Endothelial cell of umbilical vein (primary cell): ENCODE measurements at regions of chr1 and their contacts with region 1.

Region 1: GRCh38 chr1:40877698-40878097 is 15.5 kb upstream of the CITED4 start:
- DNase-seq: peak; percentile 94
- H3K4me3 ChIP-seq: no peak overlapping the region
- H3K27ac ChIP-seq: peak overlapping the region; percentile 98
- H3K4me1 ChIP-seq: peaks cover 42% of the 10 kb centered on the region
- H3K27me3 ChIP-seq: no peaks in the 10 kb centered on the region
- CTCF ChIP-seq: no peak
- POLR2A ChIP-seq: no peak

Region 2: GRCh38 chr1:40862008-40862863 is 15.5 kb before region 1 on chr1 and contains the start of gene CITED4:
- CTCF ChIA-PET with region 1: interaction called, 10 read pairs
- POLR2A ChIA-PET with region 1: interaction called, 13 read pairs
- dilution Hi-C with region 1: no loop called
- intact Hi-C with region 1: loop called (anchors 1 kb)
- DNase-seq: peak; percentile 94
- H3K4me3 ChIP-seq: peak within 1 kb of the TSS; percentile 39 to 52 (median 47)
- H3K27ac ChIP-seq: peak within 1 kb of the TSS; percentile 4
- H3K4me1 ChIP-seq: peaks cover 10% of the 10 kb centered on the region
- H3K27me3 ChIP-seq: no peaks in the 10 kb centered on the region
- CTCF ChIP-seq: no peak
- POLR2A ChIP-seq: peak; percentile 94
- total RNA-seq, gene CITED4: 10.9 and 11.3 TPM in 2 replicates

Region 3: DNA sequence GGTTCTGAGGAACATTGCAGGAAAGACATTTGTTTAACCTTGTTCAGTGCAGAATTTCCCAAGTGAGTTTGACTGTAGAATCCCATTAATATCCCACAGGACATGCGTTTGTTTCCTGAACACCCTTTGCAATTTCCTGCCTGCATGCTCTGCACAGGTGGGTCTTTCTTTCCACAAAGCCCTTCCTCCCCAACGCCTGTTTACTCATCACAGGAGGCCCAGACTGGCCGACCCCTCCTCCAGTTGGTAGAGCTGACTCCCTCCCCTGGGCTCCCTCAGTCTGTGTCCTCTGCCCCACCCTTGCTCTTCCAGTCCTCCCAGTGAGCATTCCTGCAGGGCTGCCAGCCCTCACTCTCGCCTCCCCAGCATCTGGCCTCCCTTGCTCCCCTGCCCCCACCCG is 54.3 kb after region 1 on chr1:
- CTCF ChIA-PET with region 1: no interaction called
- POLR2A ChIA-PET with region 1: no interaction called
- dilution Hi-C with region 1: no loop called
- intact Hi-C with region 1: loop called (anchors 1 kb)
- DNase-seq: peak; percentile 70
- H3K4me3 ChIP-seq: no peak overlapping the region
- H3K27ac ChIP-seq: peak overlapping the region; percentile 28
- H3K4me1 ChIP-seq: peaks cover 13% of the 10 kb centered on the region
- H3K27me3 ChIP-seq: no peaks in the 10 kb centered on the region
- CTCF ChIP-seq: no peak
- POLR2A ChIP-seq: no peak